ENCODE measurements at regions of chr5 and their contacts with region 1.

Region 1: DNA sequence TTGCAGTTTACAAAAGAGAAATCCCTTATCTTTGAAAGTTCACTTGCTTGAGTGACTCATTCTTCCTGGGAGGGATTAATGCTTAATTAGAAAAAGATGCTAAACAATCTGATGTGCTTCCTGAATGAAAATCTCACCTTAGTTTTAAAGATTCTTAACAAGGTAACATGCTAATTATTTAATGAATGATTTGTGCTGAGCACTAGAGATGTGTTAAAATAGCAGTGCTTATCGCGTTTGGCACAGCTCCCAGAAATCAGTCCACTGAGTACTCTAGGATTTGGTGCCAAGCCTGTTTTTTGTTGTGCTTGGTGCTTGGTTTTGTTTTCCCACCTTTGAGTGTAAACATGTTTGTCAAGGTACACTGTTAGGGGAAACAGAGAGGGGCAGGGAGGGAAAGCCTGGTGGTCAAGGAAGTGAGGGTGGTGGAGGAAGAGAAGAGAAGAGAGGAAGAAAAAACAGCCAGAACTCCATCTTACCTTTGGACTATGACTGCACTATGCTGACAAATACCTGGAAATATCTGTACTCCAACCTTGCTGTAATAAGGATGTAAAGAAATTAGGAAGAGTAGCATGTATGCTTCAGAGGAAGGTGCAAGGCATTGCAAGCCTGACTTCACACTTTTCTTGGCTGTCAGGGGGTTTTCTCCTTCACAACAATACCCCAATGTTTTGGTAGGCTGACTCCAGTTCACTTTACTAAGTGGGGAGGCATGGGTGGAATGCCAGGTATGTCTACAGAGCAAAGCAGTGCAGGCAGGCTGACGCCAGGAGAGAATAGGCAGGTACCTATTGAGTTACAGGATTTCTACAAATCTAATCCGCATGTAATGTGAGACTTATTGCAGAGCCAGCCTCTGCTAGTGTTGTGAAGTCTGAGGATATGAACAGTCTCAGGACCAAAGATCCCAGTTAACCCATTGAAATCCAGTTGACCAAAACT is 157.2 kb upstream of the ISL1 start:
- DNase-seq: peak; percentile 60 to 70
- H3K4me3 ChIP-seq: no peak overlapping the region
- H3K4me3 Mint-ChIP-seq: peak overlapping the region; percentile 10
- H3K27ac Mint-ChIP-seq: peak overlapping the region; percentile 78
- H3K4me1 ChIP-seq: peaks cover 23% of the 10 kb centered on the region
- H3K4me1 Mint-ChIP-seq: peaks cover 14% of the 10 kb centered on the region
- H3K27me3 ChIP-seq: no peaks in the 10 kb centered on the region; the same call in 1 of the 2 replicates
- H3K27me3 Mint-ChIP-seq: no peaks in the 10 kb centered on the region
- CTCF ChIP-seq: no peak

Region 2: DNA sequence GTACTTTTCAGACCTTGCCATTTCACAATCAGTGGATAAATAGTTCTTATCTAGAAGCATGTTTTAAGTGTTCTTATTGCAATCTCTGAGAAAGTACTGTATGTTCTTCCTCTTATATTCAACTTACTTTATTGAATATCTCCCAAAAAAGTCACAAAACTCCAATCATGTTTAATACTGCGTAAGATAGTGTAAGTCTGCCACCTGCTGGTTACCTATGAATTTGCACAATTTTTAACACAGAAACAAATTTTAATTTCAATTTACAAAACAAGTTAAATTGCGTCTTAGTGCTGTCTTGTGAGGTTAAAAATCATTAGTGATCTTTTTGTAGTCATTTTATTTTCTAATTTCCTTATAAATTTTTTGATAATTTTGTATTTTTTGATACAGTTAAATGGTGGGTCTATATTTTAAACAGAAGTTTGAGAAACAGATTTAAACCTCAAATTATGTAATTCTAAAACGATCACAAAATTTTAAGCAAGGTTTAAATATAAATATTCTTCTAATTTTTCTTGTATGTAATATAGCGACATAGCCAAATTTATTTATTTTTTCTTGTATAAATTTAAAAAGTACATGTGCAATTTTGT is 900.7 kb before region 1 on chr5:
- CTCF ChIA-PET with region 1: no interaction called
- POLR2A ChIA-PET with region 1: no interaction called
- intact Hi-C with region 1: no loop called
- DNase-seq: peak in 1 of 2 experiments; percentile 25
- H3K4me3 ChIP-seq: no peak overlapping the region
- H3K4me3 Mint-ChIP-seq: no peak overlapping the region
- H3K27ac Mint-ChIP-seq: no peak overlapping the region
- H3K4me1 ChIP-seq: no peaks in the 10 kb centered on the region
- H3K4me1 Mint-ChIP-seq: no peaks in the 10 kb centered on the region
- H3K27me3 ChIP-seq: no peaks in the 10 kb centered on the region
- H3K27me3 Mint-ChIP-seq: no peaks in the 10 kb centered on the region
- CTCF ChIP-seq: peak; percentile 61 to 63

Region 3: GRCh38 chr5:50898966-50899365 is 327.1 kb before region 1 on chr5:
- CTCF ChIA-PET with region 1: no interaction called
- POLR2A ChIA-PET with region 1: no interaction called
- intact Hi-C with region 1: no loop called
- DNase-seq: no peak
- H3K4me3 ChIP-seq: no peak overlapping the region
- H3K4me3 Mint-ChIP-seq: no peak overlapping the region
- H3K27ac Mint-ChIP-seq: no peak overlapping the region
- H3K4me1 ChIP-seq: no peaks in the 10 kb centered on the region
- H3K4me1 Mint-ChIP-seq: no peaks in the 10 kb centered on the region
- H3K27me3 ChIP-seq: no peaks in the 10 kb centered on the region
- H3K27me3 Mint-ChIP-seq: no peaks in the 10 kb centered on the region
- CTCF ChIP-seq: no peak

Region 4: GRCh38 chr5:51001227-51001923 is 224.7 kb before region 1 on chr5:
- CTCF ChIA-PET with region 1: no interaction called
- POLR2A ChIA-PET with region 1: no interaction called
- intact Hi-C with region 1: no loop called
- DNase-seq: no peak
- H3K4me3 ChIP-seq: no peak overlapping the region
- H3K4me3 Mint-ChIP-seq: no peak overlapping the region
- H3K27ac Mint-ChIP-seq: no peak overlapping the region
- H3K4me1 ChIP-seq: no peaks in the 10 kb centered on the region
- H3K4me1 Mint-ChIP-seq: no peaks in the 10 kb centered on the region
- H3K27me3 ChIP-seq: no peaks in the 10 kb centered on the region
- H3K27me3 Mint-ChIP-seq: peaks cover 12% of the 10 kb centered on the region
- CTCF ChIP-seq: no peak

Region 5: GRCh38 chr5:51194671-51195070 is 31.4 kb before region 1 on chr5:
- CTCF ChIA-PET with region 1: interaction called, 12 read pairs
- POLR2A ChIA-PET with region 1: no interaction called
- intact Hi-C with region 1: no loop called
- DNase-seq: no peak
- H3K4me3 ChIP-seq: no peak overlapping the region
- H3K4me3 Mint-ChIP-seq: no peak overlapping the region
- H3K27ac Mint-ChIP-seq: no peak overlapping the region
- H3K4me1 ChIP-seq: no peaks in the 10 kb centered on the region
- H3K4me1 Mint-ChIP-seq: no peaks in the 10 kb centered on the region
- H3K27me3 ChIP-seq: no peaks in the 10 kb centered on the region
- H3K27me3 Mint-ChIP-seq: no peaks in the 10 kb centered on the region
- CTCF ChIP-seq: no peak

Region 6: GRCh38 chr5:51208291-51208690 is 17.8 kb before region 1 on chr5:
- CTCF ChIA-PET with region 1: no interaction called
- POLR2A ChIA-PET with region 1: no interaction called
- intact Hi-C with region 1: loop called (anchors 2 kb)
- DNase-seq: peak in 1 of 2 experiments; percentile 5
- H3K4me3 ChIP-seq: no peak overlapping the region
- H3K4me3 Mint-ChIP-seq: no peak overlapping the region
- H3K27ac Mint-ChIP-seq: peak overlapping the region; percentile 23
- H3K4me1 ChIP-seq: peaks cover 3% of the 10 kb centered on the region; the same call in 1 of the 2 replicates
- H3K4me1 Mint-ChIP-seq: peaks cover 7% of the 10 kb centered on the region
- H3K27me3 ChIP-seq: no peaks in the 10 kb centered on the region
- H3K27me3 Mint-ChIP-seq: no peaks in the 10 kb centered on the region
- CTCF ChIP-seq: no peak

Measured in Caco-2 (cell line).